Panc1 (cell line): ENCODE measurements at regions of chr16 and their contacts with region 1.

Region 1: GRCh38 chr16:72467157-72467759 is 295.3 kb upstream of the PMFBP1 start:
- DNase-seq: peak; percentile 17
- ATAC-seq: no peak
- H3K4me3 ChIP-seq: no peak overlapping the region
- H3K27ac ChIP-seq: no peak overlapping the region
- H3K4me1 ChIP-seq: no peaks in the 10 kb centered on the region
- H3K27me3 ChIP-seq: no peaks in the 10 kb centered on the region
- CTCF ChIP-seq: peak; percentile 68

Region 2: GRCh38 chr16:72124761-72125634 is 342.3 kb before region 1 on chr16:
- CTCF ChIA-PET with region 1: no interaction called
- POLR2A ChIA-PET with region 1: no interaction called
- in situ Hi-C with region 1: no loop called
- intact Hi-C with region 1: loop called (anchors 5 kb)
- DNase-seq: peak; percentile 27
- ATAC-seq: peak; percentile 95
- H3K4me3 ChIP-seq: no peak overlapping the region
- H3K27ac ChIP-seq: no peak overlapping the region
- H3K4me1 ChIP-seq: no peaks in the 10 kb centered on the region
- H3K27me3 ChIP-seq: 0 out of 2 replicates have a peak, but pooled peaks cover 2% of the 10 kb centered on the region
- CTCF ChIP-seq: peak; percentile 81

Region 3: GRCh38 chr16:72241930-72242329 is 225.3 kb before region 1 on chr16:
- CTCF ChIA-PET with region 1: interaction called, 6 read pairs
- POLR2A ChIA-PET with region 1: no interaction called
- in situ Hi-C with region 1: no loop called
- intact Hi-C with region 1: loop called (anchors 2 kb)
- DNase-seq: peak; percentile 7
- ATAC-seq: peak; percentile 88
- H3K4me3 ChIP-seq: no peak overlapping the region
- H3K27ac ChIP-seq: no peak overlapping the region
- H3K4me1 ChIP-seq: no peaks in the 10 kb centered on the region
- H3K27me3 ChIP-seq: no peaks in the 10 kb centered on the region
- CTCF ChIP-seq: peak; percentile 73